IMR-90 (cell line): ENCODE measurements at regions of chr11 and their contacts with region 1.

Region 1: GRCh38 chr11:57277845-57278709 is 41.0 kb upstream of the APLNR start:
- DNase-seq: peak; percentile 84
- ATAC-seq: peak; percentile 89
- H3K4me3 ChIP-seq: peak overlapping the region; percentile 13; the same call in 1 of the 2 replicates
- H3K27ac ChIP-seq: peak overlapping the region; percentile 84
- H3K4me1 ChIP-seq: peaks cover 29% of the 10 kb centered on the region
- H3K27me3 ChIP-seq: no peaks in the 10 kb centered on the region
- CTCF ChIP-seq: peak; percentile 90
- POLR2A ChIP-seq: no peak
- RAD21 ChIP-seq: peak; percentile 76

Region 2: DNA sequence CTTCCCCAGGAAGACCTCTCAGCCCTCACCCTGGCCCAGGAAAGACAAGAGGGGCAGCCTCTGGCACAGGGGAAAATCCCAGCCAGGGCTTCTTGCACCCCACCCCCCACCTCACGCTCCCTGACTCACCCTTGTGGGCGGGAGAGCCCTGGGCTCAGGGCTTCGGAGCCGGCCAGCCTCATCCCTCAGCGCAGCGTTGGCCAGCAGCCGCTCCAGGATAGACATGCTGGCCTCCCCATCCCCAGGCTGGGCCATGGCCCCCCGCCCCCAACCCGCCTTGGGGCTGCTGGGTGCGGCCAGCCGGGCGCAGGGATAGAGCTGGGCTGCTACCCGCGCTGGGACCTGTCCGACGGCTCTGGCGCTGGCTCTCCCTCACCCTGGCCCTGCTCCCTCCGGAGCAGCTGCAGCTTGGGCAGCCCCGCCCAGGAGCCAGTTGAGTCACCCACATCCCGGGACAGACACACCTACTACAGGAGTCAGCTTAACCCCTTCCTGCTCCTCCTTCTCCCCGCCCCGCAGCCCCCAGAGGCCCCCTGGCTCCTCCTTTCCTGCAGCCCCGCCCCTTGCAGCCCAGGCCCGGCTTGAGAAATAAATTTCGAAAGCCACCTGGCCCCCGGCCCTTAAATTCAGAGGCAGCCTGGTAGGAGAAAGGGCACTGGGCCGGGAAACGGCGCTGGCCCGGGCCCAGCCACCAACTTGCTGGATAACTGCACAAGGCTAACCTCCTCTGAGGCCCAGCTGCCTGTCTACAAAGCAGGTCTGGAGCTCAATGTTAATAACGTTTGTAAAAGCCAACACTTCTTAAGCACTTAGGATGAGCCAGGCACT is 33.2 kb after region 1 on chr11:
- CTCF ChIA-PET with region 1: no interaction called
- POLR2A ChIA-PET with region 1: no interaction called
- dilution Hi-C with region 1: no loop called
- in situ Hi-C with region 1: no loop called
- intact Hi-C with region 1: loop called (anchors 1 kb)
- DNase-seq: peak; percentile 97
- ATAC-seq: peak; percentile 94
- H3K4me3 ChIP-seq: peak overlapping the region; percentile 43
- H3K27ac ChIP-seq: peak overlapping the region; percentile 97
- H3K4me1 ChIP-seq: peaks cover 50% of the 10 kb centered on the region
- H3K27me3 ChIP-seq: no peaks in the 10 kb centered on the region
- CTCF ChIP-seq: no peak
- POLR2A ChIP-seq: peak; percentile 65; the same call in 1 of the 2 replicates
- RAD21 ChIP-seq: no peak